Colonic mucosa (tissue), 4 donors: ENCODE measurements at regions of chr17 and their contacts with region 1.

Region 1: GRCh38 chr17:41665566-41666236 is 23.0 kb upstream of the EIF1 start:
- DNase-seq: peak; percentile 92
- H3K4me3 ChIP-seq: peak overlapping the region; percentile 41
- H3K27ac ChIP-seq: peak overlapping the region; percentile 84
- H3K4me1 ChIP-seq: no peaks in the 10 kb centered on the region
- H3K27me3 ChIP-seq: no peaks in the 10 kb centered on the region
- CTCF ChIP-seq: peak; percentile 97

Region 2: DNA sequence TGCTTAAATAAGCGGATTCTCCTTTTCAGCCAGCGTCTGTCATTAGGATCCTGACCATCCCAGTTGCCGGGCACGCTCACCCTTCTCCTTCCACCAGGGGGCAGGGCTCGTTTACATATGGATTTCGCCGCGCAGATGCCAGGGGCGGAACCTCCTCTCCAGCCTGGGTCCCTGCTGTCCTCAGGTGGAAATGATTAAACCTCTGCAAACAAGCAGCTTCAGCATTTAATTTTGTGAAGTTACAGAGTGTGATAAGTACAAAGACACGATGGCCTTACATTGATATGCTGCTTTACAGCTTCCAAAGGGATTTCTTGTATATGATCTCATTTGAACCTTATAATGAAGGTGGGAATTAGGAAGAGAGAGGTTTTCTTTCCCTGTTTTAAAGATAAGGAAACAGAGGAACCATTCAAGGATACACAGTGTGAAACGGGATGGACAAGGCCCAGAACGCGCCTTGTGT is 862.1 kb before region 1 on chr17:
- intact Hi-C with region 1: loop called (anchors 5 kb)
- DNase-seq: peak; percentile 84
- H3K4me3 ChIP-seq: no peak overlapping the region
- H3K27ac ChIP-seq: no peak overlapping the region
- H3K4me1 ChIP-seq: no peaks in the 10 kb centered on the region
- H3K27me3 ChIP-seq: peaks cover 8% of the 10 kb centered on the region
- CTCF ChIP-seq: peak; percentile 74

Region 3: GRCh38 chr17:41548844-41549595 is 116.7 kb before region 1 on chr17:
- intact Hi-C with region 1: loop called (anchors 5 kb)
- DNase-seq: peak; percentile 93
- H3K4me3 ChIP-seq: no peak overlapping the region
- H3K27ac ChIP-seq: peak overlapping the region; percentile 87
- H3K4me1 ChIP-seq: peaks cover 23% of the 10 kb centered on the region
- H3K27me3 ChIP-seq: no peaks in the 10 kb centered on the region
- CTCF ChIP-seq: peak; percentile 93